ENCODE measurements at regions of chr2 and their contacts with region 1.

Region 1: DNA sequence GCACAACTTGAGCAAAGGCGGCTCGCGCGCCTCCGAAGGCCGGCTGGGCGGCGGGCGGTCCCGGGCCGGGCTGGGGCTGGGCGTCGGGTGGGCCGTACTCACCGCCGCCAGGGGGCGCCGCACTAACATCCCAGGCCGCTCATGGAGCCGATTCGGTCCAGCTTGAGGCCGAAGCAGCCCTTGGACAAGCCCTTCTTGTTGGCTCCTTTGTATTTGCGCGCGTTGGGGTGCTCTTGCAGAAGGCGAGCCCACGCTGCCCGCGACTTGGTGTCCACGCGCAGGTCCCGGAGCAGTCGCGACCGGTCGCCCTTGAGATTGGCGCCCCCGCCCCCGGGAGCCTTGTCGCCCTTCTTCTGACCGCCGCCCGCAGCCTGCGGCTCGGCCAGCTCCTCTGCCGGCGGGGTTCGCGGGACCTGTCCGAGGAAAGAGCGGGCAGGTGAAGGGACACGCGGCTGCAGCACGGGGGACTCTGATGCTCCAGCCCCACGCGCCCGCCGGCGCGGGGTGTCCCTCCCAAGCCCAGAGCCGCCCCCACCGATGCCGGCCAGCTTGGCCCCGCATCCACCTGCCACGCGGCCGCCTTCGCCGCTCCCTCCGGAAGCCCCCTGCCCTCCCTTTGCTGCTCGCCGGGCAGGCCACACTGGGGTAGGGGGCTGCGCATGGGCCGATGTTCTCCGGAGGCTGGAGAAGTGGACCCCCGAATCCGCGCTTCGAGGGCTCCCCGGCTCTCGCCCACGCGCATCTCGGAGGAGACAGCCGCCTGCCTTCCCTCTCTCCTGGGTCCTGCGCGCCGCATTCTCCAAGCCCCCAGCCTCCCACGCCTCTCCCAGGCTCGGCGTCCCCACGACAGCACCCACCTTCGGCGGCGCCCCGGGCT is 655 bp downstream of the NPPC start:
- DNase-seq: peak; percentile 92
- CTCF ChIP-seq: peak; percentile 89

Region 2: GRCh38 chr2:231701456-231702373 is 223.8 kb before region 1 on chr2:
- in situ Hi-C with region 1: no loop called
- DNase-seq: no peak
- CTCF ChIP-seq: no peak

Region 3: GRCh38 chr2:231732604-231733003 is 192.9 kb before region 1 on chr2:
- in situ Hi-C with region 1: no loop called
- DNase-seq: no peak
- CTCF ChIP-seq: no peak

Region 4: DNA sequence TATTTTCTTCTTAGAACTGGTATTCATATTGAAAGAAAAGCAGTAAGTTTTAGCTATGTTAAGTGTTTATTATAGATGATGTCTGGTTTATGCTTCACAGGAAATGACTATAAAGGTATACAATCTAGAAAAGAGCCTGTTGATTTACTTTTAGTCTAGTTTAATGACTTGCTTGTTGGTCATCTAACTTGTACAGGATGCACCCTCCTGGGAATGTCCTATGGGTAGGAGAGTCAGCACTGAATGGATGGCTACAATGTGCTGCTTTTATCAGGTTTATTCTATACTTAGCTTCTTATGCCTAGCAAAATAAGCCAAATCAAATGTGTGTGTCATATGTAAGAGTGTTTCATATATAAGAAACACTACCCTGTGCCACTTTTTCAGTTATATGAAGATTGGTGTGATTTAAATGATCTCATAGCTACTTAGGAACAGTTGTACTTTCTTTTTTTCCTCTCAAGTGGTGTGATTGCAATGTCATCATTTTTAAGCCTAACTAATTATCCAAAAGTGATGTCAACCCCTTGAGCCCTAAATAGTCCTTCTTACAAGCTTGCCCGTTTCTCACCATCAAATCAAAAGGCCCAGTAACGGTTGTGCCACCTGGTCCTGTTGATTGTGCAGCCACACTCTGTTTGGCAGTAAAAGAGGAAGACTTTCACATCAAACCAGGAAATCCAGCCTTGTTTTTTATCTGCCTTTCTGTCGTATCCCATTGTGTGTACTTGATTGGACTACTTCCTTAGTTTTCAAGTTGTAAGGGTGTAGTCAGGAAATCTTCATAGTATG is 212.0 kb after region 1 on chr2:
- in situ Hi-C with region 1: loop called (anchors 5 kb)
- DNase-seq: no peak
- CTCF ChIP-seq: no peak

Region 5: GRCh38 chr2:232315049-232315922 is 389.7 kb after region 1 on chr2:
- in situ Hi-C with region 1: loop called (anchors 10 kb)
- DNase-seq: peak; percentile 68
- CTCF ChIP-seq: no peak

Measured in GM13976 (cell line).